Activated T-helper 2 cell treated with anti-CD3 and anti-CD28 coated beads, Interferon-gamma antibody, Interleukin-2, Interleukin-4, amounts not matched to agents 10 μg/mL and 5 μg/mL and 100 μg/mL, durations not matched to agents 14 hours and 24 hours and 36 hours (primary cell): ENCODE measurements at regions of chr1 and their contacts with region 1.

Region 1: GRCh38 chr1:84166797-84167196 is 22.7 kb downstream of the PRKACB start:
- DNase-seq: no peak
- H3K4me3 Mint-ChIP-seq: no peak overlapping the region
- H3K27ac Mint-ChIP-seq: no peak overlapping the region
- H3K4me1 Mint-ChIP-seq: peaks cover 43% of the 10 kb centered on the region
- H3K27me3 Mint-ChIP-seq: no peaks in the 10 kb centered on the region

Region 2: GRCh38 chr1:84156210-84156621 is 10.6 kb before region 1 on chr1:
- intact Hi-C with region 1: loop called (anchors 2 kb)
- DNase-seq: no peak
- H3K4me3 Mint-ChIP-seq: no peak overlapping the region
- H3K27ac Mint-ChIP-seq: no peak overlapping the region
- H3K4me1 Mint-ChIP-seq: peaks cover 57% of the 10 kb centered on the region
- H3K27me3 Mint-ChIP-seq: no peaks in the 10 kb centered on the region